ENCODE measurements at regions of chr12 and their contacts with region 1.

Region 1: GRCh38 chr12:64650762-64651161 is 40.5 kb downstream of the RASSF3 start:
- DNase-seq: peak; percentile 97
- ATAC-seq: peak; percentile 94
- H3K4me3 ChIP-seq: no peak overlapping the region
- H3K27ac ChIP-seq: peak overlapping the region; percentile 78
- H3K4me1 ChIP-seq: peaks cover 17% of the 10 kb centered on the region
- H3K27me3 ChIP-seq: no peaks in the 10 kb centered on the region
- CTCF ChIP-seq: no peak

Region 2: GRCh38 chr12:64459394-64459891 is 191.3 kb before region 1 on chr12:
- CTCF ChIA-PET with region 1: no interaction called
- POLR2A ChIA-PET with region 1: interaction called, 16 read pairs
- intact Hi-C with region 1: no loop called
- DNase-seq: no peak
- ATAC-seq: no peak
- H3K4me3 ChIP-seq: no peak overlapping the region
- H3K27ac ChIP-seq: no peak overlapping the region
- H3K4me1 ChIP-seq: no peaks in the 10 kb centered on the region
- H3K27me3 ChIP-seq: no peaks in the 10 kb centered on the region
- CTCF ChIP-seq: no peak

Region 3: GRCh38 chr12:64600189-64600588 is 50.6 kb before region 1 on chr12:
- CTCF ChIA-PET with region 1: no interaction called
- POLR2A ChIA-PET with region 1: no interaction called
- intact Hi-C with region 1: loop called (anchors 2 kb)
- DNase-seq: peak; percentile 17
- ATAC-seq: peak; percentile 91
- H3K4me3 ChIP-seq: no peak overlapping the region
- H3K27ac ChIP-seq: no peak overlapping the region
- H3K4me1 ChIP-seq: peaks cover 5% of the 10 kb centered on the region; the same call in 1 of the 2 replicates
- H3K27me3 ChIP-seq: no peaks in the 10 kb centered on the region
- CTCF ChIP-seq: no peak

Region 4: DNA sequence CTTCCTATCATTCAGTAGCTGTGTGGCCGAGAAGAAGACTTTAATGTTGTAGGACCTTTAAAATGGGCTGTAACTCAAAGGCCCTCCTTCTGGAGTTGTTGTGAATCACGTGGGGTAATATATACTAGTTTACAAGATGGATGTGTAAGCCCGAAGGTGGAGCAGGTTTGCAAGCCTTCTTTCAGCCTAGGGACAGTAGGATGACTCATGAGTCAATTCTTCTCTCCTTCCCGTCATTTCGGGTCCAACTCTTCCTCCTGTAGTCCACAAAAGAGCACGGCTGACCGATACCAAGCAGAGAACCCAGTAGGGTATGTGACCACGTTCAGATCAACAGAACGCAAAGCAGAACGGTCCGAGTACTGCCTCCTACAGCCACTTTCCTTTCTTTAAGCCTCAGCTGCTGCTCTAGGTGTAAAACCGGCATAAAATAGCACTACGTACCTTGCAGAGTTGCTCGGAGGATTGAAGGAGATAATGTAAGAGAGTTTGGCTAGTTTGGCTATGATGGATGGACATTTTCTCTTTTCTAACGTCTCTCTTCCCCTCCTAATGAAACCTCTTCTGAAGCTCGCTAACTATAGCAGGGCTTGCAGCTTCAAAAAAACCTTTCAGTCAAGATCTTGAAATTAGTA is 41.7 kb before region 1 on chr12:
- CTCF ChIA-PET with region 1: interaction called, 3 read pairs
- POLR2A ChIA-PET with region 1: no interaction called
- intact Hi-C with region 1: loop called (anchors 2 kb)
- DNase-seq: peak; percentile 86
- ATAC-seq: peak; percentile 54
- H3K4me3 ChIP-seq: peak overlapping the region; percentile 69
- H3K27ac ChIP-seq: peak overlapping the region; percentile 78
- H3K4me1 ChIP-seq: peaks cover 10% of the 10 kb centered on the region; the same call in 1 of the 2 replicates
- H3K27me3 ChIP-seq: no peaks in the 10 kb centered on the region
- CTCF ChIP-seq: no peak

Region 5: GRCh38 chr12:64625243-64626077 is 25.3 kb before region 1 on chr12:
- CTCF ChIA-PET with region 1: no interaction called
- POLR2A ChIA-PET with region 1: no interaction called
- intact Hi-C with region 1: loop called (anchors 1 kb)
- DNase-seq: peak; percentile 94
- ATAC-seq: peak; percentile 77
- H3K4me3 ChIP-seq: peak overlapping the region; percentile 50
- H3K27ac ChIP-seq: peak overlapping the region; percentile 97
- H3K4me1 ChIP-seq: peaks cover 48% of the 10 kb centered on the region
- H3K27me3 ChIP-seq: no peaks in the 10 kb centered on the region
- CTCF ChIP-seq: peak; percentile 14; the same call in 1 of the 2 replicates

Region 6: DNA sequence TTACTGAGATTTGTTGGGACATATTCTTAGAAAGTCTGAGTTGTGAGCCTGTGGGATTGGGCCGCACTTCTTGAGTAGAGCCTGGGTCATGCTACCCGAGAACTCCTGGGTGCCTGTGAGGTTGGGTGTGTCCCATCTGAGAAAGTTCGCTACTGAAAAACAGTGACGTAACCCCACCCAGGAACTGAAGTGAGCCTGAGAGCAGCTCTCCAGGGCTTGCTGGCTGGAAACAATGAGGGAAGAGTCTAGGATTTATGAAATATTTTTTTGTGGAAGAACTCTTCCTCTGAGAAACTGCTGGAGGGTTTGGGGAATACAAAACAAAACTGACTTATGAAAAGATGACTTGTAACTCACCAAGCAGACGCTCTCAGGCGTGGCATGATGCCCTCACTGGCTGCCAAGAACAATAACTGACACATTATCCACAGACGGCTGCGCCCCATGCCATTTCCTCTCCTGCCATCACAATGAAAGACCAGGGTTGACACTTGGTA is 28.8 kb after region 1 on chr12:
- CTCF ChIA-PET with region 1: no interaction called
- POLR2A ChIA-PET with region 1: no interaction called
- intact Hi-C with region 1: loop called (anchors 1 kb)
- DNase-seq: peak; percentile 90
- ATAC-seq: peak; percentile 82
- H3K4me3 ChIP-seq: peak overlapping the region; percentile 65
- H3K27ac ChIP-seq: peak overlapping the region; percentile 93
- H3K4me1 ChIP-seq: peaks cover 44% of the 10 kb centered on the region
- H3K27me3 ChIP-seq: no peaks in the 10 kb centered on the region
- CTCF ChIP-seq: no peak

Measured in PC-3 (cell line).